GM23248 (cell line): ENCODE measurements at regions of chr10 and their contacts with region 1.

Region 1: DNA sequence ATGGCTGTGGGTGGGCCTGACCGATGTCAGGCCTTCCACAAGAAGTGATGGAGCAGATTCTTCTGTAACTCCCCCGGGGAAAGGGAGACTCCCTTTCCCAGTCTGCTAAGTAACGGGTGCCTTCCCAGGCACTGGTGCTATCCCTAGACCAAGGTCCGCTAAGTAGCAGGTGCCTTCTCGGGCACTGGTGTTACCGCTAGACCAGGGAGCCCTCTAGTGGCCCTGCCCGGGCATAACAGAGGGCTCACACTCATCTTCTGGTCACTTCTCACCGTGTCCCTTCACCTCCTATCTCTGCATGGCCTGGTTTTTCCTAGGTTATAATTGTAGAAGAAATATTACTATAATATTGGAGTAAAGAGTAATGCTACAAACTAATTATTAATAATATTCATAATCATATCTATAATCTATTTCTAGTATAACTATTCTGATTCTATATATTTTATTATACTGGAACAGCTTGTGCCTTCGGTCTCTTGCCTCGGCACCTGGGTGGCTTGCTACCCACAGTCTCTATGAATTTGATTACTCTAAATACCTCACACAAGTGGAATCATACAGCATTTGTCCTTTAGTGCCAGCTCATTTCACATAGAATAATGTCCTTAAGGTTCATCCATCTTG is 1378.7 kb downstream of the XPNPEP1 start:
- DNase-seq: peak; percentile 83
- H3K4me3 ChIP-seq: no peak overlapping the region
- H3K27ac ChIP-seq: no peak overlapping the region
- H3K4me1 ChIP-seq: 0 out of 2 replicates have a peak, but pooled peaks cover 7% of the 10 kb centered on the region
- H3K27me3 ChIP-seq: no peaks in the 10 kb centered on the region

Region 2: GRCh38 chr10:106705681-106706100 is 1838.9 kb before region 1 on chr10:
- in situ Hi-C with region 1: loop called (anchors 25 kb)
- DNase-seq: peak; percentile 75
- H3K4me3 ChIP-seq: peak overlapping the region; percentile 57
- H3K27ac ChIP-seq: no peak overlapping the region
- H3K4me1 ChIP-seq: no peaks in the 10 kb centered on the region
- H3K27me3 ChIP-seq: no peaks in the 10 kb centered on the region; the same call in 1 of the 2 replicates

Region 3: DNA sequence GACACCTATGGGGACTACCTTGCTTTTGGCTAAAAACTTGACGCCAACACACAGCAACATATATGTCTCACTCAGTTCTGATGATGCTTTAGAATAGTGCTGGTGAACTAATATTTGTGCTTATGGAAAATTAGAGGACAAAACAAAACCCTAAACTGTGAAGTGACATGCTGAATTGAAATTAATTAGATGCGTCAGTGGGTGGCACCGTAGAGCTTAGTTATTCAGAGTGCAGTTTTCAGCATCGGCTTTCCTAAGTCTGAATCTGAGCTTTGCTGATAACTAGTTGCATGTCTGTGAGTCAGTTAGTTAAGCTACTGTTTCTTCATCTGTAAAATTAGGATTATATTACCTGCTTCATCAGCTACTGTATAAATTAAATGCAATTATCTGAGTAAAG is 1135.1 kb before region 1 on chr10:
- in situ Hi-C with region 1: loop called (anchors 25 kb)
- DNase-seq: peak; percentile 65
- H3K4me3 ChIP-seq: no peak overlapping the region
- H3K27ac ChIP-seq: no peak overlapping the region
- H3K4me1 ChIP-seq: no peaks in the 10 kb centered on the region
- H3K27me3 ChIP-seq: no peaks in the 10 kb centered on the region

Region 4: GRCh38 chr10:108204479-108205305 is 339.9 kb before region 1 on chr10:
- in situ Hi-C with region 1: loop called (anchors 25 kb)
- DNase-seq: peak; percentile 78
- H3K4me3 ChIP-seq: no peak overlapping the region
- H3K27ac ChIP-seq: no peak overlapping the region
- H3K4me1 ChIP-seq: no peaks in the 10 kb centered on the region
- H3K27me3 ChIP-seq: no peaks in the 10 kb centered on the region